ENCODE measurements at regions of chr10 and their contacts with region 1.

Region 1: GRCh38 chr10:3935141-3935540 is 150.1 kb upstream of the KLF6 start:
- DNase-seq: peak; percentile 75
- H3K4me3 Mint-ChIP-seq: peak overlapping the region; percentile 56
- H3K27ac Mint-ChIP-seq: peak overlapping the region; percentile 86
- H3K4me1 Mint-ChIP-seq: peaks cover 67% of the 10 kb centered on the region
- H3K27me3 Mint-ChIP-seq: peaks cover 3% of the 10 kb centered on the region

Region 2: DNA sequence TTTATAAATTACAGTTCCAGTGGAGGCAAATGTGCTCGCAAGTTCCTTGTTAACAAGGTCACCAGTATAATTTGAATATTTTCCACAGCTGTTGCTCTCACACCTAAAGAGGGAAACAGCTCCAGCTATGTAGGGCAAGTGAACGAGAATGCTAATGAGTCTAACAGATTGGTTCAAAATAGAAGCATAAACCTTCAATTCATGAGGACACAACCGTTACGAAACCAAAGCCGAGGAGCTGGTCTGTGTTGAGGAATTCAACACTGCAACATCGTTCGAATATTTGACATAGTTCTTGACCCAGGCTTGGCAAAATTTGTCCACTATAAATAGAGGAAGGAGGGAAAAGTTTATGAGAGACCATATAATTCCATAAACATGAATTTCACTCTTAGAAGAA is 311.4 kb before region 1 on chr10:
- intact Hi-C with region 1: loop called (anchors 1 kb)
- DNase-seq: no peak
- H3K4me3 Mint-ChIP-seq: no peak overlapping the region
- H3K27ac Mint-ChIP-seq: peak overlapping the region; percentile 89
- H3K4me1 Mint-ChIP-seq: peaks cover 35% of the 10 kb centered on the region
- H3K27me3 Mint-ChIP-seq: peaks cover 8% of the 10 kb centered on the region

Region 3: DNA sequence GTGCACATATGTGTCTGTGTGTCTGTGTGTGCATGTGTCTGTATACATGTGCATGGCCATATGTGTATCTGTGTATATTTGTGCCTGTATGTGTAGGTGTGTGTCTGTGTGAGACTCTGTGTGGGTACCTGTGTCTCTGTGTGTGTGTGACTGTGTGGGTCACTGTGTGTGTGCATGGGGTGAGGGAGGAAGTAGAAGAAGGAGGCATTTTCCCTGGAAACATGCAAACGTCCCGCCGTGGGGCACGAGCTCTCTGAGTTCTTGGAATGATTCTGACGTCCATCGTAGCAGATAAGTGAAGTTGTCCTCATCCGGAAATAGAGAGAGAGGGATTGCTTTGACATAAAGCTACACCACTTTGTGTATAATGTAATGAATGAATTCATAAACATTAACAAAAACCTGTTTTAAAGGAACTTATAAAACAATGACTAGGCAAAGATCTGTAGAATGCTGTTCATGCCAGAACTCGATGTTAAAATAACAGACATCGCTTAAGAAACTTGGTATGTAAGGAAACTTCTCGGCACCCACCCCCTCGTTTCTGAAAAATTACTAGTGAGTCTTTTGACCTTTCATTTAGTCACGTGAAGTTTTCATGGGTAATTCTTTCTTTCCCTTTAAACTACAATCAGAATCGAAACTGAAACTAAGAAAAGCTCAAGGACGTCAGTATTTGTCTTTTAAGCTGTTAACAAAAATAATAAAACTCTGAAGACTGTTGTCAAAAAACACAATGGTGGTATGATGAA is 106.6 kb before region 1 on chr10:
- intact Hi-C with region 1: loop called (anchors 1 kb)
- DNase-seq: no peak
- H3K4me3 Mint-ChIP-seq: peak overlapping the region; percentile 58
- H3K27ac Mint-ChIP-seq: peak overlapping the region; percentile 93
- H3K4me1 Mint-ChIP-seq: peaks cover 57% of the 10 kb centered on the region
- H3K27me3 Mint-ChIP-seq: no peaks in the 10 kb centered on the region

Region 4: GRCh38 chr10:3887885-3888476 is 47.2 kb before region 1 on chr10:
- intact Hi-C with region 1: loop called (anchors 1 kb)
- DNase-seq: peak; percentile 48
- H3K4me3 Mint-ChIP-seq: peak overlapping the region; percentile 20
- H3K27ac Mint-ChIP-seq: peak overlapping the region; percentile 76
- H3K4me1 Mint-ChIP-seq: peaks cover 38% of the 10 kb centered on the region
- H3K27me3 Mint-ChIP-seq: no peaks in the 10 kb centered on the region

Region 5: DNA sequence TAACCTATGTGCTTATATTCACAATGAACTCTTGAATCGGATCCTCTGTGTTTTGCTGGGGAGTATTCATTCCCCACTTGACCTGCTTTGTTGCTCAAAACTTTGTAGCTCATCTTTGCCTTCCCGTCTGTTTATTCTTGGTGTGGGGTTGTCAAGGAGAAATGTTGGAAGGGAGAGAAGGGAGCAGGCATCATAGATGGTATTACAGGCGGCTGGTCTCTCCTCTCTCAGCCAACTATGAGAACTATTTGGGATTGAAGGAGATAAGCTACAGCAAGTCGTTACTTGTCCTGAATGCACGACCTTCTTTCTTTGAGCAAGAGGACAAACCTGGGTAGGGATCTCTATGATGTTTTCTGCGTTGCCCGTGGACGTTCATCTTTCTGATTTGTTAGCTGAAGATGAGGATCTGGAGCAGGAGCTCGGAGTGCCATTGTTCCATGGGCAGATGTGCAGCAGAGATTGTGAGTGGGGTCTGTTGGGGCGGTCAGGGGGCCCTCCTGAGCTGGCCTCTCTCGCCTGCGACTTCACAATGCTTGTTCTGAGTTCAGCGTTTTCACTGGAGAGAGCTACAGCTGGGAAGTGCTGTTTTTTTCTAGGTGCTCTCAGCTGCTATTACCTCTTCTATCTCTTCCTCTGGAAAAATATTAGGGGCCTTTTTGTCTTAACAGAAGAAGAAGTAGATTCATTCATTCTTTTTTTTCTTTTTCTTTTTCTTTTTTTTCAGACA is 23.3 kb before region 1 on chr10:
- intact Hi-C with region 1: no loop called
- DNase-seq: no peak
- H3K4me3 Mint-ChIP-seq: no peak overlapping the region
- H3K27ac Mint-ChIP-seq: no peak overlapping the region
- H3K4me1 Mint-ChIP-seq: no peaks in the 10 kb centered on the region
- H3K27me3 Mint-ChIP-seq: no peaks in the 10 kb centered on the region

Region 6: DNA sequence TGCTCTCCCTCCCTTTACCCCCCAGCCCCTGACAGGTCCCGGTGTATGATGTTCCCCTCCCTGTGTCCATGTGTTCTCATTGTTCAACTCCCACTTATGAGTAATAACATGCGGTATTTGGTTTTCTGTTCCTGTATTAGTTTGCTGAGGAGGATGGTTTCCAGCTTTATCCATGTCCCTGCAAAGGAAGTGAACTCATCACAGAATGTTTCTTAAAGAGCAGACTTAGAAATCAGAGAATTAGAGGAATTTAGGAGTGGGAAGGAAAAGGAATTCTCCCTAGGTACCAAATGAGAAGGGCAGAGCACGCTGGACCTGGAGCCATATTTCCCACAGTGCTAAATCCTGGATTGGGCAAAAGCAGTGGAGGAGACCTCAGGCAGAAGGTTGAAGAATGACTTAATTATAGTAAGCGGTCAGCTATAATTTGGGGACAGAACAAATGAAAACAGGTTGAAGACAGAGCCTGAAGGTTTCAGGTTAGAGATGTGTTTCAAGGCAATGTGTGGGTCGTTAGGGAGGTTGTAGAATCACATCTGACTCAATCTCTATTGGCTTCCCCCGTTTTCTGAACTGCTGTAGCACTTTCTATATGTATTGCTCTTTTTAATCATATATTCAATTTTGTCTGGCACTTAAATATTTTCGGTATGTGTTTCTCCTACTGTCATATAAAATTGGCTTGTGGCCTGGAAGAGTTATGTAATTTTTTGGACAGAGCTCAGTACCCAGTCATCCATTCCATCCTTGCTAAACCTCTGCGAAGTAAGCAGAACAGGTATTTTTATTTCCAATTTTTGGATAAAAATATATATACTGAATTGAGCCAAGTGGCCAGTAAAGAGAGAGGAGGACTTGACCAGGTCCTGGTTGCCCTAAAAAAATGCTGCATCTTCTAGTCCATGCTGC is 60.4 kb after region 1 on chr10:
- intact Hi-C with region 1: no loop called
- DNase-seq: no peak
- H3K4me3 Mint-ChIP-seq: no peak overlapping the region
- H3K27ac Mint-ChIP-seq: no peak overlapping the region
- H3K4me1 Mint-ChIP-seq: peaks cover 5% of the 10 kb centered on the region
- H3K27me3 Mint-ChIP-seq: peaks cover 11% of the 10 kb centered on the region

Region 7: GRCh38 chr10:4013651-4014121 is 78.5 kb after region 1 on chr10:
- intact Hi-C with region 1: loop called (anchors 5 kb)
- DNase-seq: peak; percentile 22
- H3K4me3 Mint-ChIP-seq: no peak overlapping the region
- H3K27ac Mint-ChIP-seq: no peak overlapping the region
- H3K4me1 Mint-ChIP-seq: peaks cover 21% of the 10 kb centered on the region
- H3K27me3 Mint-ChIP-seq: no peaks in the 10 kb centered on the region

Region 8: DNA sequence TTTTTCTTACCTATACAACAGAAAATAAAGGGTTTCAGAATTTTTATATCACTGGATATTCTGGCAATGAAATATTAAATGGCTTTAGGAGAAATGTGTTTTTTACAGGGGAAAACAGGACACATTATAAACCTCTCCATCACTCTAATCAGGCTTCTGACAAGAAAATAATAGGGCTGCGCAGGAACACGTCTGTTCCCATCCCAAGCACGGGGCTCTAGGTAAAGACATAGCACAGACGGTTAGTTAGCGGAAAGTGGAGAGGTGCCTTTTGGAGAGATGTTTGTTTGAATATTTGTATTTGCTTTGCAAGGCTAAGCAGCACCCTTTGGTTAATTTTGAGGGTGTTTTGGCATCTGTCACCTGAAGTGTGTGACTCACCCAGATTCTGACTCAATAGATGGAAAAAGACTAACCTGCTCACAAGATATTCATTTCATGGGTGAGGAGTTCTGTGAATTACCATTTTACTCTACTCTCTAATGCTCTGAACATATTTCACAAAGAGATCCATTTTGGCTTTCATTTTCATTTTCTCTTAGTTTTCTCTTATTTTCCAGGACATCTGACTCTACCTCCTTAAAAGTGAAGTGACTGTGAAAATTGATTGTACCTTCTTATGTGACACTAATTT is 716.4 kb after region 1 on chr10:
- intact Hi-C with region 1: loop called (anchors 1 kb)
- DNase-seq: no peak
- H3K4me3 Mint-ChIP-seq: peak overlapping the region; percentile 8
- H3K27ac Mint-ChIP-seq: peak overlapping the region; percentile 85
- H3K4me1 Mint-ChIP-seq: peaks cover 32% of the 10 kb centered on the region
- H3K27me3 Mint-ChIP-seq: peaks cover 3% of the 10 kb centered on the region